ENCODE measurements at regions of chr20 and their contacts with region 1.

Region 1: GRCh38 chr20:51372176-51372803 is 170.2 kb downstream of the NFATC2 start:
- DNase-seq: peak; percentile 69 to 73
- H3K4me3 ChIP-seq: no peak overlapping the region
- H3K27ac ChIP-seq: no peak overlapping the region
- H3K4me1 ChIP-seq: peaks cover 0 to 4% of the 10 kb centered on the region in 2 donors
- H3K27me3 ChIP-seq: no peaks in the 10 kb centered on the region
- CTCF ChIP-seq: peak; percentile 42 to 93 (median 86)
- POLR2A ChIP-seq: no peak

Region 2: DNA sequence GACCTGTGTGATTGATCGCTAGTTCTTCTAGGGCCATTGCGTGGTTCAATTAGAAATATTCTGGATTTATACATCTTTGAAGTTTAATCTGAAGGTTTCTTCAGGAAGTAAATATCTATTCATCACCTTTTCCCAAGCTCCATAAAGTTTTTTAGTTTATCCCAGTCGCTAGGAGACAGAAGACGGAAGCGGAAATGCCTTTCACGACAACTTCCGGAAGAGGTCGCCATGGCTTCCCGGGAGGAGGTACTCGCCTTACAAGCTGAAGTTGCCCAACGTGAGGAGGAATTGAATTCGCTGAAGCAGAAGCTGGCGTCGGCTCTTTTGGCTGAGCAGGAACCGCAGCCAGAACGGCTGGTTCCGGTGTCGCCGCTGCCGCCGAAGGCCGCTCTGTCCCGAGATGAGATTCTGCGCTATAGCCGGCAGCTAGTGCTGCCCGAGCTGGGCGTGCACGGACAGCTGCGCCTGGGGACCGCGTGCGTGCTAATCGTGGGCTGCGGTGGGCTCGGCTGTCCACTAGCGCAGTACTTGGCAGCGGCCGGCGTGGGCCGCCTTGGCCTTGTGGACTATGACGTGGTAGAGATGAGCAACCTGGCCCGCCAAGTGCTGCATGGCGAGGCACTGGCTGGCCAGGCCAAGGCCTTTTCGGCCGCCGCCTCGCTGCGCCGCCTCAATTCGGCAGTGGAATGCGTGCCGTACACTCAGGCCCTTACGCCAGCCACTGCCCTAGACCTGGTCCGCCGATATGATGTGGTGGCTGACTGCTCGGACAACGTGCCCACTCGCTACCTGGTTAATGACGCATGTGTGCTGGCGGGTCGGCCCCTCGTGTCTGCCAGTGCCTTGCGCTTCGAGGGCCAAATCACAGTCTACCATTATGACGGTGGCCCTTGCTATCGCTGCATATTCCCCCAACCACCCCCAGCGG is 413.4 kb before region 1 on chr20 and contains the start of gene MOCS3:
- intact Hi-C with region 1: no loop called
- DNase-seq: peak; percentile 78 to 80
- H3K4me3 ChIP-seq: peak within 1 kb of the TSS; percentile 82 to 99 (median 86)
- H3K27ac ChIP-seq: peak within 1 kb of the TSS; percentile 84 to 95 (median 90)
- H3K4me1 ChIP-seq: peaks cover 21 to 24% of the 10 kb centered on the region in 2 donors
- H3K27me3 ChIP-seq: no peaks in the 10 kb centered on the region
- CTCF ChIP-seq: no peak
- POLR2A ChIP-seq: peak in 1 of 2 donors; percentile 38
- total RNA-seq, gene MOCS3: 6.7 to 7.8 (median 7.6) TPM

Region 3: DNA sequence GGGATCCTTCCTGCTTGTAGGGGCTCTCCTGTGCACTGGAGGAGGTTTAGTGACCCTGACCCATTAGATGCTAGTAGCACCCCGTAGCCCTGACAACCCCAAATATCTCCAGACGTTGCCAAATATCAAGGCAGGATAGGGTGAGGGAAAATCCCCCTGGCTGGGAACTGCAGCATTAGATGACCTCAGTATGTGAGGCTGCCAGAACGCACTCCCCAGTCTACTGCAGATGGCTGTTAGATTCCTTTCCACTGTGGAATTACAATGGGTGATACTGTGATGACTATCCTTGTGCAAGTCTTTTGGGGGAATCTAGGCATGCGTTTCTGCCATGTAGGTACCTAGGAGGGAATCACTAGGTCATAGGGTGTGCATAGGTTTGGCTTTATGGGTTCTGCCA is 123.1 kb before region 1 on chr20:
- intact Hi-C with region 1: no loop called
- DNase-seq: no peak
- H3K4me3 ChIP-seq: no peak overlapping the region
- H3K27ac ChIP-seq: no peak overlapping the region
- H3K4me1 ChIP-seq: no peaks in the 10 kb centered on the region
- H3K27me3 ChIP-seq: no peaks in the 10 kb centered on the region
- CTCF ChIP-seq: no peak
- POLR2A ChIP-seq: no peak

Region 4: DNA sequence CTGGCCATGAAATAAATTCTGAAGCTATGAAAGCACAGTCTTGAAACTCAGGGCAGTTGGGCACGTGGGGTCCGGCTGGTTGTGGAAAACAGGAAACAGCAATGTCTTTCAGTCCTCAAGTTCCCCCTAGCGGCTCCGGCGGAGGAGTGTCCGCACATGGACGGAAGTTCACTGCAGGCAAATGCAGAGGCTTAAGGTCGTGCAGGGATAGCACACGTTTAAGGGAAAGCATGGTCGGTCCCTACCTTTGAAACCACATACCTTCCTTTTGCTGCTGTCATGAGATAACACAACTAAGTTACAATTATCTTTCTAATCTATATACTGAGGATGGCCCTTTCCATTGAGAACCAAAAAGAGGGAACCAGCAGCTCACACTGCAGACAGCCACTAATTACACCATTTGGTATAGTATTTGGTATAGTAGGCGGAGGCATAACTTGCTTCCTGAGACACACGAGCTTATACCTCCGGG is 222.8 kb after region 1 on chr20:
- intact Hi-C with region 1: loop called (anchors 2 kb)
- DNase-seq: peak; percentile 88 to 91
- H3K4me3 ChIP-seq: no peak overlapping the region
- H3K27ac ChIP-seq: no peak overlapping the region
- H3K4me1 ChIP-seq: no peaks in the 10 kb centered on the region
- H3K27me3 ChIP-seq: no peaks in the 10 kb centered on the region
- CTCF ChIP-seq: peak; percentile 42 to 95 (median 84)
- POLR2A ChIP-seq: no peak

Region 5: GRCh38 chr20:52083627-52084232 is 711.4 kb after region 1 on chr20:
- intact Hi-C with region 1: loop called (anchors 10 kb)
- DNase-seq: peak; percentile 66 to 76
- H3K4me3 ChIP-seq: no peak overlapping the region
- H3K27ac ChIP-seq: no peak overlapping the region
- H3K4me1 ChIP-seq: no peaks in the 10 kb centered on the region
- H3K27me3 ChIP-seq: no peaks in the 10 kb centered on the region
- CTCF ChIP-seq: peak in 5 of 6 experiments; percentile 14 to 72 (median 62)
- POLR2A ChIP-seq: no peak

Measured in thyroid gland (tissue), 4 donors.